ENCODE measurements at regions of chr13 and their contacts with region 1.

Region 1: DNA sequence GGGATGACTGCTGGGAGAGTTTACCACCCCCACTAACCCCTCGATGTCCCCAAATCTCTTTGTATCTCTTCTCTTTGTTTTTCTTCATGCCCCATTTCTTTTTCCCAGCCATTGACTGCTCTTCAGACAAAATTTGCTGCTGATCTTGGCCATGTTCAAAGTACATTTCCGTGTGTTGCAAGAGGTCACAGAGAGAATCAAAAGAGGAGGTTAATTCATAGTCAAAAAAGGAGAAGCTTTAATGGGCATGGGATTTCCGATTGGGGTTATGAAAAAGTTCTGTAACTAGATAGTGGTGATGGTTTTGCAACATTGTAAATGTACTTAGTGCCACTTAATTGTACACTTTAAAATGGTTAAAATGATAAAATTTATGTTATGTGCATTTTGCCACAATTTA is 121.1 kb downstream of the FLT1 start:
- DNase-seq: no peak
- H3K4me3 ChIP-seq: no peak overlapping the region
- H3K27ac ChIP-seq: no peak overlapping the region
- H3K4me1 ChIP-seq: no peaks in the 10 kb centered on the region
- H3K27me3 ChIP-seq: no peaks in the 10 kb centered on the region
- CTCF ChIP-seq: no peak

Region 2: GRCh38 chr13:28313579-28313978 is 60.2 kb before region 1 on chr13:
- CTCF ChIA-PET with region 1: interaction called, 17 read pairs
- dilution Hi-C with region 1: no loop called
- in situ Hi-C with region 1: no loop called
- intact Hi-C with region 1: no loop called
- DNase-seq: no peak
- H3K4me3 ChIP-seq: no peak overlapping the region
- H3K27ac ChIP-seq: no peak overlapping the region
- H3K4me1 ChIP-seq: peaks cover 5% of the 10 kb centered on the region
- H3K27me3 ChIP-seq: no peaks in the 10 kb centered on the region
- CTCF ChIP-seq: no peak

Region 3: GRCh38 chr13:28449826-28450773 is 76.3 kb after region 1 on chr13:
- CTCF ChIA-PET with region 1: no interaction called
- dilution Hi-C with region 1: no loop called
- in situ Hi-C with region 1: no loop called
- intact Hi-C with region 1: no loop called
- DNase-seq: no peak
- H3K4me3 ChIP-seq: no peak overlapping the region
- H3K27ac ChIP-seq: no peak overlapping the region
- H3K4me1 ChIP-seq: no peaks in the 10 kb centered on the region
- H3K27me3 ChIP-seq: no peaks in the 10 kb centered on the region
- CTCF ChIP-seq: no peak

Measured in mammary epithelial cell (primary cell).